Activated CD4-positive, alpha-beta memory T cell treated with anti-CD3 and anti-CD28 coated beads for 36 hours (primary cell): ENCODE measurements at regions of chr6 and their contacts with region 1.

Region 1: DNA sequence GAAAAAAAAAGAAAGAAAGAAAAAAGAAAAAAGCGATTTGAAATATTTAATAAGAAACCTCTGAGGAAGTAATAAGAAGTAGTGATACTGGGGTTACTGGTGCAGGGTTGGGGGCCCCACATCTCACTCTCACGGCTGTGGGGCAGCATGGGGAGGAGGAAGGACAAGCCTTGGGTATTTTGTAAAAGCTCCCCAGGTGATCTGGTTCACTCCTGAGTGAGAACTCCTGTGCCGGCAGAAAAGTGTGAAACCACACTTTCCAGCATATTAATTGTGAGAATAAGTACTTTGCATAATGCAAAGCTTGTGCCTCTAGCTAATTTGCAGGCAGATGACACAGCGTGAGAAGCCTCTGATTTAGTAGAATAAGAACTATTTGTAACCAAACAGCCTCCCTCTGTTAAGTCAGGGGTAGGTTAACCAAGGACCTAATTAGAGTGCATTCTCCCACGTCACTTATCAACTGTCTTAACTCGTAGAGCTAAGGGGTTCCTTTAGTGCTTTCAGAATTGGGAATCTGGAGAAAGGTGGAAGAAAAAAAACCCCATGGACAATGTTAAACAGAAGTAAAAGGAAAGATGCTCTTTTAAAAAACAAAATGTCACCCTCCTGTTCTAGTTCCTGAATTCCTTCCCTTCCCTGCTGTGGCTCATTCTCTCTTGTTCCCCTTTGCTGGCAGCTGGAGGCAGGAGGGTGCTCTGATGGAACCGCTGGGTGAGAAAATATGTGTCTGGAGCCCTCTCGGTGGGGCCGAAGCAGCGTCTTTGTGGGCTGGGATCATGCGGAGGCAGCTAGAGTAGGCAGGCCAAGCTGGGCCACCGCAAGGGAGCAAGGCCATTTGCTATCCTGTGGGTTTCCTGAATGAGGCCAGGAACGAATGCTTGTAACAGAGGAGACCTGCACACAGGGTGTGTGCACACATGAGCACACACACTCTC is 108.7 kb downstream of the FYN start:
- DNase-seq: peak; percentile 80
- H3K4me3 Mint-ChIP-seq: peak overlapping the region; percentile 59
- H3K27ac Mint-ChIP-seq: peak overlapping the region; percentile 95
- H3K4me1 Mint-ChIP-seq: peaks cover 98% of the 10 kb centered on the region
- H3K27me3 Mint-ChIP-seq: no peaks in the 10 kb centered on the region

Region 2: GRCh38 chr6:111591104-111591900 is 173.2 kb before region 1 on chr6:
- CTCF ChIA-PET with region 1: no interaction called
- POLR2A ChIA-PET with region 1: no interaction called
- intact Hi-C with region 1: no loop called
- DNase-seq: no peak
- H3K4me3 Mint-ChIP-seq: no peak overlapping the region
- H3K27ac Mint-ChIP-seq: no peak overlapping the region
- H3K4me1 Mint-ChIP-seq: peaks cover 26% of the 10 kb centered on the region
- H3K27me3 Mint-ChIP-seq: no peaks in the 10 kb centered on the region

Region 3: GRCh38 chr6:111709615-111710398 is 54.7 kb before region 1 on chr6:
- CTCF ChIA-PET with region 1: interaction called, 15 read pairs
- POLR2A ChIA-PET with region 1: interaction called, 4 read pairs
- intact Hi-C with region 1: loop called (anchors 1 kb)
- DNase-seq: peak; percentile 68
- H3K4me3 Mint-ChIP-seq: no peak overlapping the region
- H3K27ac Mint-ChIP-seq: peak overlapping the region; percentile 74
- H3K4me1 Mint-ChIP-seq: peaks cover 53% of the 10 kb centered on the region
- H3K27me3 Mint-ChIP-seq: no peaks in the 10 kb centered on the region

Region 4: DNA sequence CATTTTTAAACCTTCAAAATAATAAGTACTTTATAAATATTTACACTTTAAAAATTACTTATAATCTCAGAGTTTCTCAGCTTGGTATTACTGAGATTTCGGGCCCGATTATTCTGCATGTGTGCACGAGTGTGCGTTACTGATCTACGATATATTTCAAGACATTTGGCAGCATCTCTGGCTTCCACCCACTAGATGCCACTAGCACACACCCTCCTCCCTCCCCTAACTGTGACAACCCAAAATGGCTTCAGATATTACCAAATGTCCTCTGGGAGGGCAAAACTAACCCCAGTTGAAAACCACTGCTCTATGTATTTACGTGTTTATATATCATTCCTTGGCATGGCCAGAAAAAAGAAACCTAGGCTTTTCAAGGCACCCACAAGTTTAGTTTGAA is 12.8 kb after region 1 on chr6:
- CTCF ChIA-PET with region 1: interaction called, 4 read pairs
- POLR2A ChIA-PET with region 1: interaction called, 21 read pairs
- intact Hi-C with region 1: loop called (anchors 1 kb)
- DNase-seq: no peak
- H3K4me3 Mint-ChIP-seq: peak overlapping the region; percentile 41
- H3K27ac Mint-ChIP-seq: peak overlapping the region; percentile 81
- H3K4me1 Mint-ChIP-seq: peaks cover 88% of the 10 kb centered on the region
- H3K27me3 Mint-ChIP-seq: no peaks in the 10 kb centered on the region

Region 5: DNA sequence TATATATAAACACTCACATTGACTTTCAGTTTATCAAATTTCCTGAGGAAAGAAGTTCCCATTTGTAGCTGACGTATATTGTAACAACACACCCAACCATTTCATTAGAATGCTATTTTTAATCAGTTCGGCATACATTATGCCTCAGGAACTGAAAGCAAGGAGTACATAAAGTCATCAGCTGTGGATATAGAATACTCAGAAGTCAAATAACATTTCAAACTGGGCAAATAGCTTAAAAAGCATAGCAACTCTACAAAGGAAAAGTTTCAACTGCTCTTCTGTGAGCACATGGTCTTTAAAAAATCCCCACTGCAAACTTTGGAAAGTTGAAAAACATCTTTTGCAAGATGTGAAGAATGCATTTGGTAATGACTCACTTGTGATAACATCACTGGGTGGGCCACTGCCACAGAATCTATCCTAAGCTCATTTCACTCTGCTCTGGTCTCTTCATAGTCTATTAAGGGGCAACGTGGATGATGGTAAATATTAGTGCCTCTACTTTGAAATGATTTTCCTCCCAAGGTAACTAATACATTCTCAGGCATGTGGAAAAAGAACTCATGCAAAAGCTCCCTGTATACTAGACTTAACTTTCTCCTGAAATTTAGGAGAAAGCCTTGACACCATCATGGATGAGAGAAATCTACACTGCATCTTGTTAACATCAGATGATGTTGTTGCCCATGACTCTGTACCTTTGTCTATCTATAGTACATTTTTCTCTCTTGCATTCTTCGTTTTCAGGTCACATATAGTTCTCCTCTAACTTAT is 59.5 kb after region 1 on chr6:
- CTCF ChIA-PET with region 1: interaction called, 3 read pairs
- POLR2A ChIA-PET with region 1: interaction called, 18 read pairs
- intact Hi-C with region 1: loop called (anchors 1 kb)
- DNase-seq: peak; percentile 44
- H3K4me3 Mint-ChIP-seq: peak overlapping the region; percentile 21
- H3K27ac Mint-ChIP-seq: peak overlapping the region; percentile 91
- H3K4me1 Mint-ChIP-seq: peaks cover 80% of the 10 kb centered on the region
- H3K27me3 Mint-ChIP-seq: no peaks in the 10 kb centered on the region

Region 6: GRCh38 chr6:111861431-111861885 is 97.0 kb after region 1 on chr6:
- CTCF ChIA-PET with region 1: no interaction called
- POLR2A ChIA-PET with region 1: interaction called, 27 read pairs
- intact Hi-C with region 1: no loop called
- DNase-seq: peak; percentile 48
- H3K4me3 Mint-ChIP-seq: peak overlapping the region; percentile 2
- H3K27ac Mint-ChIP-seq: peak overlapping the region; percentile 52
- H3K4me1 Mint-ChIP-seq: peaks cover 100% of the 10 kb centered on the region
- H3K27me3 Mint-ChIP-seq: no peaks in the 10 kb centered on the region

Region 7: DNA sequence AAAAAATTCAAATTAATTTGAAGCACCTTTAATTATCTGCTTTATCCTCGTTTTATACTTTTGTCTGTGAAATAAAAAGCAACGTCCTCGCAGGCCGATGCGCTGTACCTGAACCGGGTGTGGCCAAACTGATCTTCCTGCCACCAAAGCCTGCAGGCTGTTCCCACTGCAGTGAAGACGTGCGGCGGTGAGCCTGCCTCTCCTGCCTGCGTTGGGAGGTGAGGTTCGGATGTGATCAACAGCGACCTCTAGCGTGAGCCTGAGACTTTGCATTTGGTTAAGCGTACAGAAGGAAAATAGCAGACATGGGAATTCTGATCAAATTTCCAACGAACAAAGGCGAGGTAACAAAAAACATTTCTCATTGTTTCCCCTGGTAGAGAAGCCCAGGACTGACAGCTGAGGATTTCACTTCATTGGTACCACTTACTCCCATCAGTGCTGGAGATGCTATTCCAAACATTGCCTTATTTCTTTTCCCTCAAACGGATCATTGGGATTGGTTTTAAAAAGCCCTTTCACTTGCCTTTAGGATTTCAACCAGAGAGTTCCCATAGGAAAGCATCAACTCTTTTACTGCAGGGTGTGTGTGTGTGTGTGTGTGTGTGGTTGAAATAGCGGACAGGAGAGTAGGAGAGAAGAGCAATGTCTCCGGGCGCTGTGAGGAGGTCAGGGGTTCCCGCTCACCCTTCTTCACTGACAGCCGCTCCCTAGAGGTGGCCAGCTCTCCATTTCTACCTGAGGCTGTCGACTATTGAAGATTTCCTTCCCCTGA is 232.8 kb after region 1 on chr6:
- CTCF ChIA-PET with region 1: interaction called, 5 read pairs
- POLR2A ChIA-PET with region 1: interaction called, 3 read pairs
- intact Hi-C with region 1: loop called (anchors 1 kb)
- DNase-seq: peak; percentile 87
- H3K4me3 Mint-ChIP-seq: peak overlapping the region; percentile 48
- H3K27ac Mint-ChIP-seq: peak overlapping the region; percentile 28
- H3K4me1 Mint-ChIP-seq: peaks cover 48% of the 10 kb centered on the region
- H3K27me3 Mint-ChIP-seq: no peaks in the 10 kb centered on the region

Region 8: DNA sequence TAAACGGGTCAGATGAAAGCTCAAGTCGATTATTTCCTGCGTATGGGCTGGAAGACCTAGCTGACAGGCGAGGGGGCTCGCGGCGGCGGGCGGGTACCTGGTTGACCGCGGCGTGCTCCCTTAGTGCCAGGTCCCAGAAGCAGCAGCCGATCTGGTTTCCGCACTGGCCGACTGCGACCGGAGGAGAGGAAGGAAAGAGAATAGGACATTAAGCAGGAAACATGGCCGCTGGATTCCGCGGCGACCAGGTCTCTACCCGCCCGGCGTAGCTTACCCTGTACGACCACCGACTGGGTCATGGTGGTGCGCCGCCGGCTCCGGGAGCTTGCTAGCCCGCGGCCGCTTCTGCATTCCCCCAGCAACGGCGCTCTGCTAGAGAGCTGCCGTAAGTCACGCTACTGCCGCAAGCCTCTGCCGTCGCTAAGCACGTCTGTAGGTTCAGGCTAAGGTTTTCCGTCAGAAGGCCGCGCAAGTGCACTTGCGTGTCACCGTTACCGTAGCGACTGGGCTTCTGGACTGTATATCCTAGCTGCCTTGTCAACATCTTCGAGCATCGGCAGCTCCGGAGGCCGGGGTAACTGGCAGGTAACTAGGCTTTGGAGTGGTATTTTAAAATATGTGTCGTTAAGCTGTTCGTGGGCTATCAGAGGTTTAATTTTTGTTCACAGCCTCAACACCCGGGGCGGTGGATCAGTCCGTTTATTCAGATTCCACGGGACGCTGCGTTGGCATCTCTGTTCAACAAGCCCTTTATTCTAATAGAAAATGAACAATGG is 322.8 kb after region 1 on chr6 and contains the starts of genes FAM229B and TUBE1:
- CTCF ChIA-PET with region 1: no interaction called
- POLR2A ChIA-PET with region 1: no interaction called
- intact Hi-C with region 1: loop called (anchors 5 kb)
- DNase-seq: peak; percentile 94
- H3K4me3 Mint-ChIP-seq: no peak within 1 kb of the TSS
- H3K27ac Mint-ChIP-seq: no peak within 1 kb of the TSS
- H3K4me1 Mint-ChIP-seq: peaks cover 9% of the 10 kb centered on the region
- H3K27me3 Mint-ChIP-seq: peaks cover 11% of the 10 kb centered on the region
- total RNA-seq, gene FAM229B: 6.7 to 7.3 TPM
- total RNA-seq, gene TUBE1: 37.2 to 39.2 TPM